Aorta (tissue), 5 donors: ENCODE measurements at regions of chr9 and their contacts with region 1.

Region 1: GRCh38 chr9:98881836-98882568 is 61.7 kb upstream of the COL15A1 start:
- DNase-seq: no peak
- ATAC-seq: no peak
- H3K4me3 ChIP-seq: no peak overlapping the region
- H3K27ac ChIP-seq: no peak overlapping the region
- H3K4me1 ChIP-seq: no peaks in the 10 kb centered on the region
- H3K27me3 ChIP-seq: peaks cover 0 to 2% of the 10 kb centered on the region in 2 donors

Region 2: DNA sequence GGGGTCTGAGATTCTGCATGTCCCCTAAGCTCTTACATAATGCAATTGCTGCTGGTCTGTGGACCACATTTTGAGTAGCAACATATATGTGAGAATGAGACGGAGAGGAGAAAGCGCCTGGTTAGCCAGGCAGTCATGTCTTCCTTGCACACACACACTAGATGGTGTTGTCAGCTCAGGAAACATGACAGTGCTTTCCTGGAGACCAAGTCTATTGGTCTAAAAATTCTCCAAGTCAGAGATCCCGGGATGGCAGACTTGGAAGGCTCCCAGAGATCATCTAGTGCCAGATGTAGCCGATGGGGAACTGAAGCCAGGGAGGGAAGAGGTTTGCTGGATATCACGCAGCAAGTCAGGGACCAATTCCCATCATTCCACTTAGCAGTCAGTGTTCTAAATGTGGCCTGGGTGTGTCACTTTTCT is 21.1 kb before region 1 on chr9:
- intact Hi-C with region 1: loop called in 1 of 2 experiments (anchors 2 kb)
- DNase-seq: peak in 1 of 2 donors; percentile 74
- ATAC-seq: peak; percentile 79
- H3K4me3 ChIP-seq: no peak overlapping the region
- H3K27ac ChIP-seq: no peak overlapping the region
- H3K4me1 ChIP-seq: no peaks in the 10 kb centered on the region
- H3K27me3 ChIP-seq: no peaks in the 10 kb centered on the region